ENCODE measurements at regions of chr5 and their contacts with region 1.

Region 1: DNA sequence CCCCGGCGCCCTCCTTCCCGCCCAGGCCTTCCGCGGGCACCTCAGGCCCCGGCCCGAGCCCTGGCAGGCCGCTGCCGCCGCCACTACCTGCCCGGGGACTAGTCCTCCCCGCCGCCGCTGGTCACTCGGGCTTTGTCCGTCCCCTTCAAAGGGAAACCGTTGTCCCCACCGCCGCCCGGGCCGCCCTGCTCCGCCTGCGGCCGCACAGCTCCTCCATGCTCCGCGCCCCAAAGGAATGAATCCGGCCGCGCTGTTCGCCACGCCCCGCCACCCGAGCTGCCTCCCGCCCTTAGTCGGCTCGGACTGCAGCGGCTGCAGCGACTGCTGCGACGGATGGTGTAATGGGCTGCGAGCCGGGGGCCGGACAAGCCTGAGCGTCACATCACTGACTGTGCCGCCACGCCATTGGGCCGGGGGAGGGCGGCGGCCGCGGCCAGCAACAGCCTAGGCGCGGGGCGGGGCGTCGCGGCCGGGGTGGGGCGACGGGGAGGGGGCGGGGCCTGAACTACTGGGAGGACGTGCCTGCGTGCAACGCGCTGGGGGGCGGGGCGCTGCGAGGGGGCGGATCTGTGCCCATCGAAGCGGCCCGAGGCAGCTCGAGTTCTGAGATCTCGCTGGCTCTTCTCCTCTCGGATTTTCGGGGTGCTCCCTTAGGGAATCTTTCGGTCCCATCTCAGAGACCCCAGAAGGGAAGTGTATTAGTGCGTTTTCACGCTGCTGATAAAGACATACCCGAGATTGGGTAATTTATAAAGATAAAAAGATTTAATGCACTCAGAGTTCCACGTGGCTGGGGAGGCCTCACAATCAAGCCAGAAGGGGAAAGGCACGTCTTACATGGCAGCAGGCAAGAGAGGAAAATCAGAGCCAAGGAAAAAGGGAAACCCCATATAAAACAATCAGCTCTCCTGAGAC is at the start of gene FEM1C:
- DNase-seq: peak; percentile 94 to 98 (median 96)
- H3K4me3 ChIP-seq: peak within 1 kb of the TSS; percentile 35 to 97 (median 88)
- H3K27ac ChIP-seq: peak within 1 kb of the TSS; percentile 79 to 99 (median 96)
- H3K27me3 ChIP-seq: no peaks in the 10 kb centered on the region
- CTCF ChIP-seq: peak in 18 of 56 donors; percentile 6 to 42 (median 17)
- total RNA-seq, gene FEM1C: 21.3 to 51.8 (median 33.7) TPM

Region 2: GRCh38 chr5:115284021-115284420 is 260.7 kb before region 1 on chr5:
- intact Hi-C with region 1: no loop called
- DNase-seq: no peak
- H3K4me3 ChIP-seq: peak overlapping the region in 1 of 59 donors; percentile 5
- H3K27ac ChIP-seq: peak overlapping the region in 8 of 59 donors; percentile 4 to 41 (median 20)
- H3K27me3 ChIP-seq: no peaks in the 10 kb centered on the region
- CTCF ChIP-seq: no peak

Region 3: GRCh38 chr5:115296124-115297022 is 248.3 kb before region 1 on chr5 and contains the start of gene CCDC112:
- intact Hi-C with region 1: loop called in 1 of 2 experiments (anchors 5 kb)
- DNase-seq: peak; percentile 58 to 87 (median 74)
- H3K4me3 ChIP-seq: peak within 1 kb of the TSS; percentile 62 to 99 (median 94)
- H3K27ac ChIP-seq: peak within 1 kb of the TSS in 55 of 59 donors; percentile 13 to 91 (median 77)
- H3K27me3 ChIP-seq: no peaks in the 10 kb centered on the region
- CTCF ChIP-seq: peak in 4 of 56 donors; percentile 11 to 15 (median 14)
- total RNA-seq, gene CCDC112: 5.8 to 17.1 (median 10.8) TPM

Region 4: GRCh38 chr5:115415143-115415491 is 129.6 kb before region 1 on chr5:
- intact Hi-C with region 1: loop called in 1 of 2 experiments (anchors 5 kb)
- DNase-seq: peak in 4 of 10 donors; percentile 10 to 44 (median 36)
- H3K4me3 ChIP-seq: no peak overlapping the region
- H3K27ac ChIP-seq: peak overlapping the region in 49 of 59 donors; percentile 4 to 85 (median 59)
- H3K27me3 ChIP-seq: no peaks in the 10 kb centered on the region
- CTCF ChIP-seq: no peak

Region 5: DNA sequence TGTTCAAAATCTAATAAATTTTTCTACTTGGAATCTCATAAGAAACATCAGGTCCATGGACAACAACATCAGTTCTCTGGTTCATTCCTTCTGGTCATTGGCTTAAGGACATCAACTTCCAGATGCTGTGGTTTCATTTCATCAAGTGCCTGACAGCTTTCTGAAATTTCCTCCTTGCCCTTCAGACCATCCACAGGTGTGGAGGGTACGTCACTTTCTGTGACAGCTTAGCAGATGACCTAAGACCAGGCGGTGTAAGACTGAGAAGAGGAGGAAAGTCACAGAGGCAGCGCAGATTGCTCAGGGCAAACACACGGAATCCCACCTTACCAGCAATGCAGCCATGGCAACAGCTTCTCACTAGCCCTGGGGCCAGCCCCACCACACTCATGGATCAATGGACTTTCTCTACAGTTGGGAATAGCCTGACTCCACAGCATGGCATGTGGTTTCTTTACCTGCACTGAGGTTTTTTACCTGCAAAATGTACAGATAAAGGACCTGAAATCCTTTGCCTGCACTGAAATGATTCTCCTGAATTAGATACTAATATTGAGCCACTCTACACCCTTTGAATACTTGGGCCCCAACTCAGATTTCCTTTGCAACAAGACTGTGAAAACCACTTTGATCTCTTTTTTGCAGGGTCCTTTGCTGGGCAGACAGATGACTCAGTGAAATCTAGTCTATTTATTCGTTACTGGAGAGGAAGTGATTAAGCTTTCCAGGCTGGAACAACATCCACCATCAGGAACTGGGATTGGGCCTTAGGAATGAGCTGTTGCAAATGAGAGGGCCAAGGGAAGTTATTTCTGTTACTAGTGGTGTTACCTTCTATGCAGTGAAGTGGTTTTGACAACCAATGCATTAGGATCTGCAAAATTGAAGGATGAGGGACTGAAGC is 30.7 kb after region 1 on chr5:
- intact Hi-C with region 1: loop called (anchors 1 to 2 kb)
- DNase-seq: no peak
- H3K4me3 ChIP-seq: no peak overlapping the region
- H3K27ac ChIP-seq: peak overlapping the region in 1 of 59 donors; percentile 14
- H3K27me3 ChIP-seq: no peaks in the 10 kb centered on the region
- CTCF ChIP-seq: no peak

Region 6: GRCh38 chr5:115586601-115587048 is 41.9 kb after region 1 on chr5:
- intact Hi-C with region 1: loop called in 1 of 2 experiments (anchors 5 kb)
- DNase-seq: no peak
- H3K4me3 ChIP-seq: no peak overlapping the region
- H3K27ac ChIP-seq: no peak overlapping the region
- H3K27me3 ChIP-seq: no peaks in the 10 kb centered on the region
- CTCF ChIP-seq: peak; percentile 63 to 91 (median 78)

Region 7: GRCh38 chr5:115625579-115626444 is 81.1 kb after region 1 on chr5 and contains the start of gene TMED7:
- intact Hi-C with region 1: loop called in 1 of 2 experiments (anchors 5 kb)
- DNase-seq: peak; percentile 98 to 100 (median 99)
- H3K4me3 ChIP-seq: peak within 1 kb of the TSS; percentile 58 to 99 (median 89)
- H3K27ac ChIP-seq: peak within 1 kb of the TSS; percentile 66 to 96 (median 91)
- H3K27me3 ChIP-seq: no peaks in the 10 kb centered on the region
- CTCF ChIP-seq: peak in 39 of 56 donors; percentile 8 to 59 (median 33)
- total RNA-seq, gene TMED7: 48.1 to 112 (median 68.4) TPM